ENCODE measurements at regions of chrX and their contacts with region 1.

Region 1: GRCh38 chrX:131830400-131831184 is 192.5 kb upstream of the STK26 start:
- DNase-seq: peak; percentile 74
- H3K4me3 ChIP-seq: no peak overlapping the region
- H3K27ac ChIP-seq: no peak overlapping the region
- H3K4me1 ChIP-seq: no peaks in the 10 kb centered on the region
- H3K27me3 ChIP-seq: no peaks in the 10 kb centered on the region
- CTCF ChIP-seq: peak in 1 of 5 experiments; percentile 54
- EP300 ChIP-seq: no peak
- POLR2A ChIP-seq: no peak

Region 2: GRCh38 chrX:132092439-132093065 is 262.0 kb after region 1 on chrX:
- in situ Hi-C with region 1: loop called in 1 of 4 experiments (anchors 25 kb)
- intact Hi-C with region 1: no loop called
- DNase-seq: peak; percentile 50
- H3K4me3 ChIP-seq: no peak overlapping the region
- H3K27ac ChIP-seq: no peak overlapping the region
- H3K4me1 ChIP-seq: no peaks in the 10 kb centered on the region
- H3K27me3 ChIP-seq: no peaks in the 10 kb centered on the region
- CTCF ChIP-seq: peak; percentile 52 to 72 (median 66)
- EP300 ChIP-seq: no peak
- POLR2A ChIP-seq: no peak

Region 3: DNA sequence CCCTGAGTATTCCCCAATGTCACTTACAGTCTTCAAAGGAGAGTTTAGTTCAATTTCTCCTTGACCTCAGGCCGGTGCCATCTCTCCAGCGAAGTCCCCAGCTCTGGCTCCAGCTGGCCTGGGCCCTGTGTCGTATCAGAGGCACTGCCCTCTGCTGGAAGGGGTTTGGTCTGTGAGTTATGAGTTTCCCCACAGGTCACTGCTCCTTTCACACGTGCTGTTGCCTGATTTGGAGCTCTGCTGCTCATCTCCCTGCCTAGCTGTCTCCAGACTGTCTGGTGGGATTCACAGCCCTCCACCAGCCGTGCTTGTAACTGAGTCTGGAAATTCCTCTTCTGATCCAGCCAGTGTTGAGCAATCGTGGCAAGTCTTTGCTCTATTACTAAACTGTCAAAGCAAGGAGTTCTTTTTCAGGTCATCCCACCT is 388.8 kb after region 1 on chrX and contains the start of gene RAP2C:
- in situ Hi-C with region 1: loop called in 1 of 4 experiments (anchors 25 kb)
- intact Hi-C with region 1: no loop called
- DNase-seq: peak; percentile 82
- H3K4me3 ChIP-seq: peak within 1 kb of the TSS; percentile 34 to 92 (median 79)
- H3K27ac ChIP-seq: peak within 1 kb of the TSS; percentile 95 to 99 (median 98)
- H3K4me1 ChIP-seq: peaks cover 4 to 19% (median 5%) of the 10 kb centered on the region in 4 donors
- H3K27me3 ChIP-seq: no peaks in the 10 kb centered on the region
- CTCF ChIP-seq: peak; percentile 44 to 59 (median 47)
- EP300 ChIP-seq: no peak
- POLR2A ChIP-seq: peak; percentile 62
- total RNA-seq, gene RAP2C: 7.0 to 143 (median 38.4) TPM

Region 4: GRCh38 chrX:132563976-132564375 is 733.4 kb after region 1 on chrX:
- in situ Hi-C with region 1: no loop called
- intact Hi-C with region 1: no loop called
- DNase-seq: no peak
- H3K4me3 ChIP-seq: no peak overlapping the region
- H3K27ac ChIP-seq: no peak overlapping the region
- H3K4me1 ChIP-seq: no peaks in the 10 kb centered on the region
- H3K27me3 ChIP-seq: no peaks in the 10 kb centered on the region
- CTCF ChIP-seq: no peak
- EP300 ChIP-seq: no peak
- POLR2A ChIP-seq: no peak

Measured in transverse colon (tissue), 4 donors.